ENCODE measurements at regions of chr3 and their contacts with region 1.

Region 1: DNA sequence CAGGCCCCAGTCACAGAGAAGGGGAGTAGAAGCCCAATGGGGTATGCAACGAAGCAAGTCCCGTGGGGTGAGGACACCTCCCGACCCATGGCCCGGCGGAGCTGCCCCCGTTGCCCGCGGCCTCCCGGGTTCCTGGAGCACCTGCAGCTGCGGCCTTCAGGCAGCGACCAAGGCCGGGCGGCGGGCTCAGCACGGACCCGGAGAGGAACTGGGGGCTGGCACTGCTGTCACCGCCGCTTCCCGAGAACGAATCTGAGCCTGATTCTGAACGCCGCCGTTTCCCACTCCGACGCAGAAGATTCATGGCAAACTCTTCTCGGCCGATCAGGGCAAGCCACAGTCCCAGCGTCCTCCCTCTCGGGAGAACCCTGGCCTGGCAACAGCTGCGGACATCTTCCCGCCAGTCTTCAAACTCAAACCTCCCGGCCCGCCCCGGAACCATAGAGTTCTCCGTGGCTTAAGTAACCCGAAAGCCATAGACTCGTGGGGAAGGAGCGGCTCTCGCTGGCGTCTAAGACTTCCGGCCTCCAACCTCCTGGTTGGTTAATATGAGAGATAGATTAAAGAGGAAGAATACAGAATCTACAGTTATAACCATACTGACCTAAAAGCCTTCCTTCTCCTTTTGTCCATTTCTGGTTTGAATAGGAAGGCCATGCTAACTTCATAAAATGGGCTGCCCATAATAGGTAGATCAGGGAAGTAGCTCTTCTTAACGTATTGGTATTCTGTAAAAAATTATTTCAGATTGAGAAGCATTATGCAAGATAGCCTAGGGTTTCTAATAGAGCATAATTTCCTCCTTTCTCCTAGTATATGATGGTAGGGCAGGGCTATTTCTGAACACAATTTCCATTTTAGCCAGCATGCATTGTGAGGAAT is at the start of gene POLQ:
- DNase-seq: peak; percentile 90 to 95 (median 92)
- ATAC-seq: peak; percentile 98 to 100
- H3K4me3 ChIP-seq: peak within 1 kb of the TSS; percentile 89
- H3K27ac ChIP-seq: peak within 1 kb of the TSS; percentile 76
- H3K4me1 ChIP-seq: no peaks in the 10 kb centered on the region
- H3K27me3 ChIP-seq: no peaks in the 10 kb centered on the region
- total RNA-seq, gene POLQ: 0.64 to 0.89 (median 0.69) TPM

Region 2: DNA sequence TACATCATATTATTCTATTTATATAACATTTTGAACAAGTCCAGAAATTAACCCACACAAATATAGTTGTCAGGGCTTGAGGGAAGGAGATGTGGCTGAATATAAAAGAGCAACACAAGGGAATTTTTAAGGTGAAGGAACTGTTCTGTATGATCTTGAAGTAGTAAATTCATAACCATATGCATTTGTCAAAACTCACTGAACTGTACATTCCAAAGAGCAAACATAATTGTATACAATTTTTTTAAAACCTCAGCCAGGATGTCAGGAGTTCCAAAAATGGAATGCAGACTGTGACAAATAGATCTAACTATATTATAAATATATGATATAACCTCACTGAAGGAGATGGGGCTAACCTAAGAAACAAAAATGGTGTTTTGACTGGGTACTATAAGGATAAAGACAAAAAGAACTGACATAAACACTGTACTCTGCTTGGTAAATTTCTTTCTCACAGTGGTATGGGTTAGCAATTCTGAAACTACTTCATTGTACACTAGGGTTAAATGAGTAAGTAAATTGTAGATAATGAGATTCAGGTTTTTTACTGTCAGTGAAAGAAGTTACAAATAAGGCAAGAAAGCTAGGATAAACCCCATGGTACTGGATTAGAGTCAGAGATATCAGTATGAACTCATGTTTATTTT is 189.4 kb after region 1 on chr3:
- intact Hi-C with region 1: no loop called
- DNase-seq: no peak
- ATAC-seq: no peak
- H3K4me3 ChIP-seq: no peak overlapping the region
- H3K27ac ChIP-seq: no peak overlapping the region
- H3K4me1 ChIP-seq: peaks cover 3% of the 10 kb centered on the region
- H3K27me3 ChIP-seq: no peaks in the 10 kb centered on the region

Region 3: GRCh38 chr3:121995161-121996137 is 449.6 kb after region 1 on chr3:
- intact Hi-C with region 1: loop called (anchors 10 kb)
- DNase-seq: peak; percentile 33 to 79 (median 78)
- ATAC-seq: peak; percentile 63 to 78
- H3K4me3 ChIP-seq: no peak overlapping the region
- H3K27ac ChIP-seq: no peak overlapping the region
- H3K4me1 ChIP-seq: no peaks in the 10 kb centered on the region
- H3K27me3 ChIP-seq: no peaks in the 10 kb centered on the region

Region 4: DNA sequence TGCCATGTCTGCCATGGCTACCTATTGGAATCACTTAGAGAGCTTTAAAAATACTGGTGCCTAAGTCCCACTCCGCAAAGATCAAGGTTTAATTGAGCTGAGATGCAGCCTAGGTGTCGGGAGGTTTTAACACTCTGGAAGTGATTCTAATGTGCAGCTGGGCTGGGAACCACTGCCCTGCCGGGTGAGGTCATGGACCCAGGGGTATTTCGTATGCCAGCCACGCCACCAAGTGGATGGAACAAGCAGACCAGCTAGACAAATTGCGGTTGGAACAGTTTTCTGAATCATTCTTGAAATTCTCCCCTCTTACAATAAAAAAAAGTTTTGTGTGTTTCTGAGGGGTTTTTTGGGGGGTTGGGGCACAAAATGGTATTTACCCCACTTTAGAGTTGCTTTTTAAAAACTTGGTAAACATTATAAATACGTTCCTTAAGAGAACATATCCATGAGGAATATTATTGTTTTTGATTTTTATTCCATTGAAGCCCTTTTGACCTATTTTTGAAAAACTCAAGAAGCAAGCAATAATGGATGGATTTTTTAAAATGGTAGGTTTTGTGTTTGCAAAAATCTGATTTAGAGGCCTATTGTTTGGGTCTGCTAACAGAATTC is 713.0 kb after region 1 on chr3:
- intact Hi-C with region 1: loop called in 2 of 4 experiments (anchors 10 kb)
- DNase-seq: peak; percentile 66 to 84 (median 80)
- ATAC-seq: peak; percentile 82 to 88
- H3K4me3 ChIP-seq: no peak overlapping the region
- H3K27ac ChIP-seq: no peak overlapping the region
- H3K4me1 ChIP-seq: no peaks in the 10 kb centered on the region
- H3K27me3 ChIP-seq: no peaks in the 10 kb centered on the region